ENCODE measurements at regions of chr3 and their contacts with region 1.

Region 1: GRCh38 chr3:119279101-119279554 is 15.1 kb upstream of the ARHGAP31 start:
- DNase-seq: no peak
- H3K4me3 ChIP-seq: no peak overlapping the region
- H3K27ac ChIP-seq: no peak overlapping the region
- H3K4me1 ChIP-seq: no peaks in the 10 kb centered on the region
- CTCF ChIP-seq: no peak

Region 2: GRCh38 chr3:118485693-118486092 is 793.4 kb before region 1 on chr3:
- CTCF ChIA-PET with region 1: no interaction called
- POLR2A ChIA-PET with region 1: no interaction called
- intact Hi-C with region 1: no loop called
- DNase-seq: no peak
- H3K4me3 ChIP-seq: no peak overlapping the region
- H3K27ac ChIP-seq: no peak overlapping the region
- H3K4me1 ChIP-seq: no peaks in the 10 kb centered on the region
- CTCF ChIP-seq: no peak

Region 3: GRCh38 chr3:119428538-119428937 is 149.4 kb after region 1 on chr3:
- CTCF ChIA-PET with region 1: no interaction called
- POLR2A ChIA-PET with region 1: no interaction called
- intact Hi-C with region 1: loop called (anchors 1 kb)
- DNase-seq: peak; percentile 26
- H3K4me3 ChIP-seq: no peak overlapping the region
- H3K27ac ChIP-seq: no peak overlapping the region
- H3K4me1 ChIP-seq: no peaks in the 10 kb centered on the region
- CTCF ChIP-seq: peak; percentile 69

Region 4: GRCh38 chr3:119559441-119559963 is 280.4 kb after region 1 on chr3 and contains the start of gene CD80:
- CTCF ChIA-PET with region 1: no interaction called
- POLR2A ChIA-PET with region 1: no interaction called
- intact Hi-C with region 1: loop called (anchors 1 kb)
- DNase-seq: peak; percentile 70
- H3K4me3 ChIP-seq: no peak within 1 kb of the TSS
- H3K27ac ChIP-seq: no peak within 1 kb of the TSS
- H3K4me1 ChIP-seq: peaks cover 3% of the 10 kb centered on the region
- CTCF ChIP-seq: peak; percentile 71
- total RNA-seq, gene CD80: not detected in 2 replicates